Cardiac septum (tissue), 1 donor: ENCODE measurements at regions of chr11 and their contacts with region 1.

Region 1: GRCh38 chr11:123580557-123581275 is 73.7 kb downstream of the SCN3B start:
- DNase-seq: peak; percentile 90

Region 2: GRCh38 chr11:123511037-123511870 is 69.5 kb before region 1 on chr11:
- intact Hi-C with region 1: loop called (anchors 2 kb)
- DNase-seq: peak; percentile 83

Region 3: GRCh38 chr11:123543797-123544196 is 36.9 kb before region 1 on chr11:
- intact Hi-C with region 1: no loop called
- DNase-seq: no peak

Region 4: GRCh38 chr11:123707606-123708205 is 127.0 kb after region 1 on chr11:
- intact Hi-C with region 1: loop called (anchors 2 kb)
- DNase-seq: no peak